ENCODE measurements at regions of chr3 and their contacts with region 1.

Region 1: DNA sequence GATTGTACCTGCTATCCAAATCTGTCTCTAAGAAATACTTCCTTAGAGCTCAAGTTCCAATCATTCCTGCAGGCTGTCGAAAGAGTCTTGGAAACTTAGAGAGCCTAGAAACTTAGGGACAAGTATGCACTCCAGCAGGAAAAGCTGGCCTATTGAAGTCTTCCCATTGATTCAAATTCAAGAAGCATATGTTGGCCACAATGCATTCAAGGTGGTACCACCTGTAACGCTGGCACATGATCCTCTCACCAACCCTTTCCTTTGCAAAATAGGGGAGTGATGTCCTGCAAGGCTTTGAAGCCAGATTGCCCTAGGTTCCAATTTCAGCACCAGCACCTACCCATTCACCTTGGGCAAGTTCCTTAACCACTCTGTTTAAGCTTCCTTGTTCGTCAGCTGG is 6.0 kb downstream of the ADAMTS9 start:
- DNase-seq: no peak
- H3K4me3 ChIP-seq: peak overlapping the region in 1 of 4 experiments; percentile 18; a peak in 1 of 8 replicates
- H3K27ac ChIP-seq: no peak overlapping the region
- H3K4me1 ChIP-seq: peaks cover 15 to 42% (median 32%) of the 10 kb centered on the region in 4 experiments
- H3K27me3 ChIP-seq: peaks cover 39 to 72% (median 62%) of the 10 kb centered on the region in 4 experiments
- CTCF ChIP-seq: no peak
- EP300 ChIP-seq: no peak; a peak in 1 of 3 replicates
- POLR2A ChIP-seq: no peak
- RAD21 ChIP-seq: no peak

Region 2: DNA sequence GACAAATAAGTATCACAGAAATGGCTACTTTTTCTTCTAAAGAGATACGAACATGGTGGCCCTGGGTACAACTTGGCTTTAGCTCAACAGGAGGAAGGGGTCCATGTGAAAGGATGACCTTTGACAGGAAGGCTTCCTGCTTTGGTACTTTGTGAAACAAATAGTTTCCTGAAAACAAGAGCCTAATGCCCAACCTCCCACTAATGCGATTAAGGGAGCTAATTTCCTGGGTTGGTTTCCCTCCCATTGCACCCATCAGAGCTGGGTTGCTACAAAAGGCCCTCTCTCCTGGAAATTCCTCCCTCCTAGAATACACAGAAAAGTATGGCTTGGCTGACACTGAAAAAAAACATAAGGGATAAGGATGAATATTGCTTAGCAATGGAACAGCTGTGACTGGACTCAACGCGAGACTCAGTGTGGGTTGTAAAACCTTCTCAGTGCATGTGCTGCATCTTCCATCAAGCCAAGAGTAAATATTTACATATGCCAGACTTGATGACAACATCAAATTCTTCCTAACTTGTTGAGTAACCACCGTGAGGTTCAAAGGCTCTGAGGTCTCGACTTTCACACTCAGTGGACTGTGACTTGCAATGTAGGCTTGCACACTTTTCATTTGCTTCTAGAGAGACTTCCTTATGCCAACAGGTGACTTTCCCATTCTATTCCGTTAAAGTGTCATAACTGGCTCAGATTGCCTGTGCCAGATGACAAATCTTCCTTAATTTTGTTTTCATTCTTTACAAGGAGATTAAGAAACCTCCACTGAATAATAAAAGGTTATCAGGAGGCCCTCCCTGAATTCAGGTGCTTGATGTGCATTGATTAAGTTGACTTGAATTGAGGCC is 54.1 kb before region 1 on chr3:
- CTCF ChIA-PET with region 1: no interaction called
- POLR2A ChIA-PET with region 1: no interaction called
- DNase-seq: no peak
- H3K4me3 ChIP-seq: no peak overlapping the region
- H3K27ac ChIP-seq: no peak overlapping the region
- H3K4me1 ChIP-seq: peaks cover 0 to 5% (median 0%) of the 10 kb centered on the region in 4 experiments; a peak in 1 of 7 replicates
- H3K27me3 ChIP-seq: no peaks in the 10 kb centered on the region
- CTCF ChIP-seq: no peak
- EP300 ChIP-seq: no peak
- POLR2A ChIP-seq: no peak
- RAD21 ChIP-seq: no peak

Region 3: GRCh38 chr3:64668582-64669510 is 13.0 kb before region 1 on chr3:
- CTCF ChIA-PET with region 1: interaction called, 10 read pairs
- POLR2A ChIA-PET with region 1: interaction called, 5 read pairs
- DNase-seq: no peak
- H3K4me3 ChIP-seq: no peak overlapping the region
- H3K27ac ChIP-seq: no peak overlapping the region
- H3K4me1 ChIP-seq: peaks cover 0 to 3% (median 2%) of the 10 kb centered on the region in 4 experiments; a peak in 1 of 7 replicates
- H3K27me3 ChIP-seq: no peaks in the 10 kb centered on the region
- CTCF ChIP-seq: no peak
- EP300 ChIP-seq: no peak
- POLR2A ChIP-seq: no peak
- RAD21 ChIP-seq: no peak

Region 4: GRCh38 chr3:64693031-64693430 is 11.2 kb after region 1 on chr3:
- CTCF ChIA-PET with region 1: interaction called, 12 read pairs
- POLR2A ChIA-PET with region 1: interaction called, 3 read pairs
- DNase-seq: no peak
- H3K4me3 ChIP-seq: no peak overlapping the region
- H3K27ac ChIP-seq: no peak overlapping the region
- H3K4me1 ChIP-seq: peaks cover 0 to 8% (median 6%) of the 10 kb centered on the region in 4 experiments; a peak in 5 of 7 replicates
- H3K27me3 ChIP-seq: peaks cover 0 to 25% (median 13%) of the 10 kb centered on the region in 4 experiments; a peak in 6 of 7 replicates
- CTCF ChIP-seq: no peak
- EP300 ChIP-seq: no peak
- POLR2A ChIP-seq: no peak
- RAD21 ChIP-seq: no peak